Common myeloid progenitor, CD34-positive (primary cell): ENCODE measurements at regions of chr17 and their contacts with region 1.

Region 1: GRCh38 chr17:39980351-39981206 is at the start of gene PSMD3:
- DNase-seq: peak; percentile 100
- H3K4me3 ChIP-seq: peak within 1 kb of the TSS; percentile 68 to 99 (median 88)
- H3K27ac ChIP-seq: peak within 1 kb of the TSS; percentile 93 to 96
- H3K4me1 ChIP-seq: peaks cover 18 to 29% (median 23%) of the 10 kb centered on the region in 4 experiments
- H3K27me3 ChIP-seq: peaks cover 0 to 4% (median 0%) of the 10 kb centered on the region in 5 experiments

Region 2: GRCh38 chr17:39939588-39940419 is 40.8 kb before region 1 on chr17:
- CTCF ChIA-PET with region 1: interaction called, 12 read pairs
- POLR2A ChIA-PET with region 1: interaction called, 4 read pairs
- DNase-seq: peak; percentile 50 to 83 (median 77)
- H3K4me3 ChIP-seq: no peak overlapping the region
- H3K27ac ChIP-seq: no peak overlapping the region
- H3K4me1 ChIP-seq: peaks cover 0 to 9% (median 6%) of the 10 kb centered on the region in 4 experiments
- H3K27me3 ChIP-seq: no peaks in the 10 kb centered on the region

Region 3: DNA sequence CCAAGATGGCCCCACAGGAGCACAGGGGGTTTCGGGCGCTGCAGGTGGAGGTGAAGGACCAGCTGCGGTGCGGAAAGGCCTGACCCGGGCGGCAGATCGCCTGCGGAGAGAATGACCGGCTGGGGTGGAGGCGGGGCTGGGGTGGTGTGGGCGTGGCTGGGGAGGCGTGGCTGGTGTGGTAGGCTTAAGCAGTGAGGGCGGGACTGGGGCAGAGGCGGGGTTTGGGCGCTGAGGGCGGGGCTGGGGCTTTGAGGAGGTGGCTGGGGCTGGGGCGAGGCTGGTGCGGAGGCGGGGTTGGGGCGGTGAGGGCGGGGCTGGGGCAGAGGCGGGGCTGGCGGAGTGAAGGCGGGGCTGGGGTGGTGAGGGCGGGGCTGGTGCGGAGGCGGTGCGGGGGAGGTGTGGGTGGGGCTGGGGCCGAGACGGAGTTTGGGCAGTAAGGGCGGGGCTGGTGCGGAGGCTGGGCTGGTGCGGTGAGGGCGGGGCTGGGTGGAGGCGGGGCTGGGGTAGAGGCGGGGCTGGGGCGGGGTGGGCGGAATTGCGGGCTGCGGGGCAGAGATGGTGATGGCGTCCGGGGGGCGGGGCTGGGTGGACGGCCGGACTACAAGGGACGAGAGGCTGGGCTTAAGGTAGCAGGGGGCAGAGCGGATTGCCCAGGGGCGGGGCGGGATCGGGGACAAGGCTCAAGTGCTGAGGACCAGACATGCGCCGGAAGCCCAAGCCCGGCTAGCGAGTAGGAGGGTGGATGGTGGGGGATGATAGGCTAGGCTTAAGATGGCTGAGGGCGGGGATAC is 27.7 kb before region 1 on chr17:
- CTCF ChIA-PET with region 1: interaction called, 197 read pairs
- POLR2A ChIA-PET with region 1: interaction called, 4 read pairs
- DNase-seq: peak; percentile 92 to 96 (median 96)
- H3K4me3 ChIP-seq: peak overlapping the region; percentile 37 to 81 (median 57)
- H3K27ac ChIP-seq: peak overlapping the region in 1 of 2 experiments; percentile 58
- H3K4me1 ChIP-seq: peaks cover 0 to 20% (median 14%) of the 10 kb centered on the region in 4 experiments
- H3K27me3 ChIP-seq: no peaks in the 10 kb centered on the region